Adrenal gland (tissue), 19 donors: ENCODE measurements at regions of chr2 and their contacts with region 1.

Region 1: DNA sequence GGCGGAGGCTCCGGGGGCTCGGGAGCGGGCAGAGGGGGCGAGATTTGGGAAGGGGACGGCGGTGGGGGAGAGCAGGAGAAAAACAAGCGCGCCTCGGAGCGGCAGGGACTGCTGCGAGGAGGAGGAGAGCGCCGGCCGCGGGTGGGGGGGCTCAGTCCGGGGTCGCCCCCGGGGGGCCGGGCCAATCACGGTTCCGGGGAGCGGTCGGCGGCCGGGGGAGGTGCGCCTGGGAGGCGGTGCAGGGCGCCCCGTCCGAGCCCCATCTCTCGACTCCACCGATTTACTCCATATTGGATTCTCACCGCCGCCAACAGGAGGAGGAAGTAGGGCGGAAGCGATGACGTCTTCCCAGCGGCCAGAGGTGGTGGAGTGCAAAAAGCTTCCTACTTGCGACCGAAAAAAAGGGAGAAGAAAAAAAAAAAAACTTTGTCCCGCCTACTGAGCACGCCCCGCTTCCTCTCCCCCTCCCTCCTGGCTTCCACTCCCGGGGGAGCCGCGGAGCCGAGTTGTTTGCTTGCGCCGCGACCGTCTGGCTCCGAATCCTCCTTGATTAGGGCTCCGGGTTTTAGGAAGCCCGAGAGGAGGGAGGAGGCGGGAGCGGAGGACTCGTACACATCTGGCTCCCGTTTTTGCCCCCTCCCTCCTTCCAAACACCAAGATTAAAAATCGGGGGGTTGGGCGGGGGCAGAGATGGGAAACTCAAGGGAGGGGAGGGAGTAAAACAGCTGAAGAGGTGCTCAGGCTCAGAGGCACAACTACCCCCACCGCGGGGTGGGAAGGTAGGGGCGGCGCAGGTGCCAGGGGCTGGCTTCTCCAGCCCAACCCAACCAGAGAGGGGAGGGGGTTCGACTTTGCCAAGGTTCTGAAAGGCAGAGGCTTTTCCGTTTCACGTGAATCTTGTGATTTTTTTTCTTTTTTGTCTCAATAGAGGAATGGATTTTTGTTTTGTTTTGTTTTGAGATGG is at the start of gene SPRED2:
- DNase-seq: peak; percentile 92 to 97 (median 95)
- H3K4me3 ChIP-seq: peak within 1 kb of the TSS; percentile 58 to 97 (median 76)
- H3K27ac ChIP-seq: peak within 1 kb of the TSS; percentile 84 to 98 (median 93)
- H3K4me1 ChIP-seq: peaks cover 9 to 36% of the 10 kb centered on the region in 2 donors
- H3K27me3 ChIP-seq: no peaks in the 10 kb centered on the region
- CTCF ChIP-seq: peak in 2 of 6 experiments; percentile 19 to 36
- POLR2A ChIP-seq: peak; percentile 79 to 83
- total RNA-seq, gene SPRED2: 5.2 to 28.4 (median 16.4) TPM

Region 2: DNA sequence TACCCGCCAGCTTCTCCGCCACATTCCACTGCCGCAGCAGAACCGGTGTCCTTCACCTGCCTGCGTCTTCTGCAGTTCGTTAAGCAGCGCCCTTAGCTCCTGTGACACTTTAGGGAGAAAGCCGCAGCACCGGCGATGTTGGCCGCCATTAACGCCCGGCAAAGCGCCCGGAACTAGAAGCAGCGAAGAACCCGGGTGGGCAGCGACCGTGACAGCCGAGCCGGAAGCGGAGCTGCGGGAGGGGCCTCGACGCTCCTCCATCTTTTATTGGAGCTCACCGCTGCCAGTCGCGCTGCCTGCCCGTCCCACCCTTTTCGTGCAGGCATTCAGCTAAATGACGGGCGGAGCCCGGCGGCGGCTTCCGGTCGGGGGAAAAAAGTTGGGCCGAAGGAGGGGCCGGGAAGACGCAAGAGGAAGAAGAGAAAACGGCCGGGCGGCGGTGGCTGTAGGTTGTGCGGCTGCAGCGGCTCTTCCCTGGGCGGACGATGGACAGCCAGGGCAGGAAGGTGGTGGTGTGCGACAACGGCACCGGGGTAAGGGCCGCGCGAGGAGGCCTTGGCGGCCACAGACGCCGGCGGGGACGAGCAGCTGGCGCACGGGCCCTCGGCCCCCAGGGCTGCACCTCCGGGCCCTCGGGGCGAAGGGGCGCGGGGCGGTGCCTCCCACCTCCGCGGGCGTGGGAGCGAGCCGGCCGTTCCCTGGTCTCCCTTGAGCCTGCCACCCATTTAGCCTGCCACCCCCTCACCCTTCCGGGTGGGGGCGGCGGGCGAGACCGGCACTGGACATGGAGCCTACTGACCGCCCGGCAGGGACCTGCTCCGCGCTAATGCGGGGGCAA is 204.9 kb before region 1 on chr2 and contains the start of gene ACTR2:
- intact Hi-C with region 1: no loop called
- DNase-seq: peak; percentile 95 to 98 (median 97)
- H3K4me3 ChIP-seq: peak within 1 kb of the TSS; percentile 41 to 89 (median 63)
- H3K27ac ChIP-seq: peak within 1 kb of the TSS; percentile 82 to 99 (median 97)
- H3K4me1 ChIP-seq: peaks cover 9 to 49% of the 10 kb centered on the region in 2 donors
- H3K27me3 ChIP-seq: no peaks in the 10 kb centered on the region
- CTCF ChIP-seq: peak in 1 of 6 experiments; percentile 18
- POLR2A ChIP-seq: peak; percentile 73 to 88
- total RNA-seq, gene ACTR2: 42.0 to 186 (median 83.9) TPM

Region 3: DNA sequence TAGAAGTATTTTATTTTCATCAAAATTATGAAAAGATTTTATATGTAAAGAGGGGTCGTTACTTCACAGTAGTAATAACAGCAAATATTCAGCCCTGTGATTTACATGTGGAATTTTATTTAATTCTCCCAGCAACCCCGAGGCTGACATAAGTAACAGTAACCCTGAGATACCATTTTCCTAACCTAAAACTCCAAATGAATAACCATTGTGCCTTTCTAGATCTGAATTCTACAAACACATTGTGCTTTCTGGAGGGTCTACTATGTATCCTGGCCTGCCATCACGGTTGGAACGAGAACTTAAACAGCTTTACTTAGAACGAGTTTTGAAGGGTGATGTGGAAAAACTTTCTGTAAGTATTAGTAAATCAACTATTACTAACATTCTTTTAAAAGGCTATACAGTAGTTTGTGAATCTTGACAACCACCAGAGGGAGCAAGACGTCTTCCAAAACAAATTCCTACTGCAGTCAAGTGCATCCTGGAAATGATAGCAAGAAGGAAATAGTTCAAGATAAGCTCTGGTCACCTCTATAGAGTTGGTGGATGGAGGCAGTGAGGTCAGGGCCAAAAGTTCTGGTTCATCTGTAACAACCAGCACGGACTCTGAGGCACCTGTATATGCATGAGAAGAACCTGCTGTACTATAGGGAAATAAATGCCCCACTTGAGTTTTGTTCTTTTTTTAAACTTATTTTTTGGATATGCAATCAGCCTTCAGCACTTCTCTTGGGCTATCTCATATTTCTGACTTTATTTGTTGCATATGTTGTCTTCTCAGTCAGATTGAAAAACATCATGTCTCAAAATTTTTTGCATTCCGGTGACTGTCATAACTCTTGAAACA is 167.5 kb before region 1 on chr2:
- intact Hi-C with region 1: loop called (anchors 10 kb)
- DNase-seq: peak in 6 of 7 donors; percentile 35 to 58 (median 40)
- H3K4me3 ChIP-seq: no peak overlapping the region
- H3K27ac ChIP-seq: no peak overlapping the region
- H3K4me1 ChIP-seq: peaks cover 0 to 8% of the 10 kb centered on the region in 2 donors
- H3K27me3 ChIP-seq: no peaks in the 10 kb centered on the region
- CTCF ChIP-seq: peak; percentile 63 to 84 (median 74)
- POLR2A ChIP-seq: no peak